ENCODE measurements at regions of chr11 and their contacts with region 1.

Region 1: GRCh38 chr11:19723572-19724342 is 11.1 kb downstream of the NAV2 start:
- DNase-seq: peak; percentile 79 to 81
- ATAC-seq: peak; percentile 46
- H3K4me3 ChIP-seq: no peak overlapping the region
- H3K27ac ChIP-seq: peak overlapping the region; percentile 96 to 100
- H3K4me1 ChIP-seq: peaks cover 22 to 24% of the 10 kb centered on the region in 2 donors
- H3K27me3 ChIP-seq: no peaks in the 10 kb centered on the region

Region 2: GRCh38 chr11:20110908-20111669 is 387.3 kb after region 1 on chr11:
- intact Hi-C with region 1: loop called in 1 of 2 experiments (anchors 10 kb)
- DNase-seq: no peak
- ATAC-seq: peak; percentile 58
- H3K4me3 ChIP-seq: no peak overlapping the region
- H3K27ac ChIP-seq: peak overlapping the region; percentile 3 to 83
- H3K4me1 ChIP-seq: peaks cover 2 to 6% of the 10 kb centered on the region in 2 donors
- H3K27me3 ChIP-seq: no peaks in the 10 kb centered on the region

Region 3: DNA sequence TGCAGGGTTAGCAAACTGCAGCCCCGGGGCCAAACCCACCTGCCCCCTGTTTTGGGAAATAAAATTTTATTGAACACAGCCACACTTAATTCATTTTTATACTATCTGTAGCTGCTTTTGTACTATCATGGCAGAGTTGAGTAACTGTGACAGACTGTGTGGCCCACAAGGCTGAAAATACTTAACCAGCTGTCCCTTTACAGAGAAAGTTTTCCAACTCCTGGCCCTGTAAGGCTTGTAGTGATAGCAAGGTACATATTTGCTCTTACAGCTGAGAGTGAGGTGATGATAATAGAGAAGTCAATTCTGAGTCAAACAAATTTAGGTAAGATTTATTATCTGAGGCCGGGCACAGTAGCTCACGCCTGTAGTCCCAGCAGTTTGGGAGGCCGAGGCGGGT is 788.2 kb after region 1 on chr11:
- intact Hi-C with region 1: no loop called
- DNase-seq: no peak
- ATAC-seq: no peak
- H3K4me3 ChIP-seq: no peak overlapping the region
- H3K27ac ChIP-seq: no peak overlapping the region
- H3K4me1 ChIP-seq: no peaks in the 10 kb centered on the region
- H3K27me3 ChIP-seq: no peaks in the 10 kb centered on the region

Measured in aorta (tissue), 5 donors.